ENCODE measurements at regions of chr9 and their contacts with region 1.

Region 1: GRCh38 chr9:105881654-105882349 is 187.5 kb downstream of the TMEM38B start:
- DNase-seq: peak; percentile 86
- ATAC-seq: peak; percentile 81
- H3K4me3 Mint-ChIP-seq: no peak overlapping the region
- H3K27ac Mint-ChIP-seq: no peak overlapping the region
- H3K4me1 Mint-ChIP-seq: peaks cover 11% of the 10 kb centered on the region
- H3K27me3 Mint-ChIP-seq: no peaks in the 10 kb centered on the region
- CTCF ChIP-seq: peak; percentile 79

Region 2: GRCh38 chr9:105835721-105836120 is 46.1 kb before region 1 on chr9:
- CTCF ChIA-PET with region 1: interaction called, 16 read pairs
- POLR2A ChIA-PET with region 1: no interaction called
- DNase-seq: peak; percentile 18
- ATAC-seq: peak; percentile 57
- H3K4me3 Mint-ChIP-seq: no peak overlapping the region
- H3K27ac Mint-ChIP-seq: no peak overlapping the region
- H3K4me1 Mint-ChIP-seq: peaks cover 29% of the 10 kb centered on the region
- H3K27me3 Mint-ChIP-seq: no peaks in the 10 kb centered on the region
- CTCF ChIP-seq: no peak

Region 3: GRCh38 chr9:105842023-105842644 is 39.7 kb before region 1 on chr9:
- CTCF ChIA-PET with region 1: interaction called, 16 read pairs
- POLR2A ChIA-PET with region 1: no interaction called
- DNase-seq: peak; percentile 34
- ATAC-seq: no peak
- H3K4me3 Mint-ChIP-seq: no peak overlapping the region
- H3K27ac Mint-ChIP-seq: no peak overlapping the region
- H3K4me1 Mint-ChIP-seq: no peaks in the 10 kb centered on the region; the same call in 1 of the 2 replicates
- H3K27me3 Mint-ChIP-seq: no peaks in the 10 kb centered on the region
- CTCF ChIP-seq: peak; percentile 80

Region 4: GRCh38 chr9:105858006-105858690 is 23.7 kb before region 1 on chr9:
- CTCF ChIA-PET with region 1: interaction called, 10 read pairs
- POLR2A ChIA-PET with region 1: no interaction called
- DNase-seq: no peak
- ATAC-seq: no peak; the same call in 1 of the 2 replicates
- H3K4me3 Mint-ChIP-seq: no peak overlapping the region
- H3K27ac Mint-ChIP-seq: no peak overlapping the region
- H3K4me1 Mint-ChIP-seq: peaks cover 5% of the 10 kb centered on the region; the same call in 1 of the 2 replicates
- H3K27me3 Mint-ChIP-seq: no peaks in the 10 kb centered on the region
- CTCF ChIP-seq: no peak

Measured in WTC11 (cell line).